ENCODE measurements at regions of chr5 and their contacts with region 1.

Region 1: GRCh38 chr5:68460147-68460798 is 244.7 kb downstream of the PIK3R1 start:
- DNase-seq: no peak
- ATAC-seq: peak; percentile 86
- H3K4me3 ChIP-seq: no peak overlapping the region
- H3K27ac ChIP-seq: no peak overlapping the region
- H3K4me1 ChIP-seq: peaks cover 5% of the 10 kb centered on the region
- H3K27me3 ChIP-seq: no peaks in the 10 kb centered on the region
- CTCF ChIP-seq: peak; percentile 58 to 72 (median 68)
- EP300 ChIP-seq: no peak
- POLR2A ChIP-seq: no peak
- RAD21 ChIP-seq: peak; percentile 95

Region 2: DNA sequence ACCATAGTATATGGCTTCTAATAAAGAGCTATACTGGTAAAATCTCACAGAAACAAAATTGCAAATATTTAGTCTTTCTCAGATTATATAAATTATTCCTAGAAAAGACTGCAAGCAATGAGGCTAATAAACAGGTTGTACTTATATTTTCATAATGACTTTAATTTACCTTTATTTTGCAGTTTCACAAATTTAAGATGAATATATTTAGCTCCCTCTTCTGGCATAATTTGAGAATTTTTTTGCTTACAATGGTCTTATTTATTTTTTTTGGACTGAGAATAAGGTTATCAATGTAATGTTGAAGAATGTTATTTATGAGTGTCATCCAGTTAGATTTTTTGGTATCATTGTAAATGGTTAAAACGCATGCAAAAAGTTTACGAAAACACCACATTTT is 188.0 kb before region 1 on chr5:
- CTCF ChIA-PET with region 1: interaction called, 15 read pairs
- POLR2A ChIA-PET with region 1: no interaction called
- RAD21 ChIA-PET with region 1: interaction called, 3 read pairs
- SMC1A ChIA-PET with region 1: interaction called, 8 read pairs
- in situ Hi-C with region 1: no loop called
- intact Hi-C with region 1: no loop called
- DNase-seq: no peak
- ATAC-seq: no peak
- H3K4me3 ChIP-seq: no peak overlapping the region
- H3K27ac ChIP-seq: no peak overlapping the region
- H3K4me1 ChIP-seq: peaks cover 34% of the 10 kb centered on the region
- H3K27me3 ChIP-seq: no peaks in the 10 kb centered on the region
- CTCF ChIP-seq: peak in 1 of 3 experiments; percentile 11; a peak in 1 of 6 replicates
- EP300 ChIP-seq: no peak
- POLR2A ChIP-seq: no peak
- RAD21 ChIP-seq: no peak

Region 3: DNA sequence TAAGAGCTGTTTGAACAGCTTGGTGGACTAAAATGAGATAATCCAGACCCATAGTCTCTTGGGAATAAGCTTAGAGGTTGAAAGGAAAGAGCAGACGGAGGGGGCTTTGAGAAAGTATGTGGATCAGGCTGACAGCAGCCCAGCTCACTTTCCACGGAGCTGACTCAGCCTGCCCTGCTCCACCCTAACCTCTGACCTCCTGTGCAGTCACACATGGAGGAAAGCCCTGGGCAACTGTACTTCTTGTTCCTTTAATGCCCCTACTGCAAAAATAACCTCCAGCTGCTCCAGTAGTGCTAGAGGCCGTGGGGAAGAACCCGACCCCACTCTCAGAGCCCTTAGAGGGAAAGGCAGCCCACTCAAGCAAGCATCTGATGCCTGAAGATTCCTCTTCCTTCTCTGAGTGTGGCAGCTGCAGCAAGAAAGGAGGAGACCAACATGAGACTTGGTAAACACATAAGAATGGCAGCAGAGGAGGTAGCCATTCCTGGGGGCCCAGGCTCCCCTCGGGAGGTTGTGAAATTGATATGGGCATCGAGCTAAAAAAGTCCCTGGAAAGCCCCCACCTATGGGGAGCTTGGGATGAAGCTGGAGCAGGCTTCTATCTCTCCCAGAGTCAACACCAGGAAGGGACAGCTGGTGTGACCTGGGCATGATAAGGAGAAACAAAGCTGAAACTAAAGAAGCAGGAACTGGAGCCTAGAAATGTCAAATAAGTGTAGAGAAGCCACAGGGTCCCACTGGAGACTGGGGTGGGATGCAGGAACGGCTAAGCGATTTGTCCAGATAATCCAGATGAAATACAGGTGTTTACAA is 40.4 kb before region 1 on chr5:
- CTCF ChIA-PET with region 1: interaction called, 5 read pairs
- POLR2A ChIA-PET with region 1: no interaction called
- RAD21 ChIA-PET with region 1: no interaction called
- SMC1A ChIA-PET with region 1: interaction called, 10 read pairs
- in situ Hi-C with region 1: no loop called
- intact Hi-C with region 1: no loop called
- DNase-seq: no peak
- ATAC-seq: no peak
- H3K4me3 ChIP-seq: no peak overlapping the region
- H3K27ac ChIP-seq: no peak overlapping the region
- H3K4me1 ChIP-seq: peaks cover 4% of the 10 kb centered on the region
- H3K27me3 ChIP-seq: no peaks in the 10 kb centered on the region
- CTCF ChIP-seq: no peak
- EP300 ChIP-seq: no peak
- POLR2A ChIP-seq: no peak
- RAD21 ChIP-seq: no peak

Region 4: GRCh38 chr5:68441309-68442073 is 18.8 kb before region 1 on chr5:
- CTCF ChIA-PET with region 1: interaction called, 63 read pairs
- POLR2A ChIA-PET with region 1: interaction called, 6 read pairs
- RAD21 ChIA-PET with region 1: interaction called, 26 read pairs
- SMC1A ChIA-PET with region 1: interaction called, 23 read pairs
- in situ Hi-C with region 1: no loop called
- intact Hi-C with region 1: no loop called
- DNase-seq: no peak
- ATAC-seq: peak; percentile 77
- H3K4me3 ChIP-seq: no peak overlapping the region
- H3K27ac ChIP-seq: peak overlapping the region; percentile 31; the same call in 1 of the 2 replicates
- H3K4me1 ChIP-seq: peaks cover 28% of the 10 kb centered on the region
- H3K27me3 ChIP-seq: no peaks in the 10 kb centered on the region
- CTCF ChIP-seq: no peak
- EP300 ChIP-seq: peak in 1 of 2 experiments; percentile 64; a peak in 2 of 4 replicates
- POLR2A ChIP-seq: no peak
- RAD21 ChIP-seq: no peak

Region 5: DNA sequence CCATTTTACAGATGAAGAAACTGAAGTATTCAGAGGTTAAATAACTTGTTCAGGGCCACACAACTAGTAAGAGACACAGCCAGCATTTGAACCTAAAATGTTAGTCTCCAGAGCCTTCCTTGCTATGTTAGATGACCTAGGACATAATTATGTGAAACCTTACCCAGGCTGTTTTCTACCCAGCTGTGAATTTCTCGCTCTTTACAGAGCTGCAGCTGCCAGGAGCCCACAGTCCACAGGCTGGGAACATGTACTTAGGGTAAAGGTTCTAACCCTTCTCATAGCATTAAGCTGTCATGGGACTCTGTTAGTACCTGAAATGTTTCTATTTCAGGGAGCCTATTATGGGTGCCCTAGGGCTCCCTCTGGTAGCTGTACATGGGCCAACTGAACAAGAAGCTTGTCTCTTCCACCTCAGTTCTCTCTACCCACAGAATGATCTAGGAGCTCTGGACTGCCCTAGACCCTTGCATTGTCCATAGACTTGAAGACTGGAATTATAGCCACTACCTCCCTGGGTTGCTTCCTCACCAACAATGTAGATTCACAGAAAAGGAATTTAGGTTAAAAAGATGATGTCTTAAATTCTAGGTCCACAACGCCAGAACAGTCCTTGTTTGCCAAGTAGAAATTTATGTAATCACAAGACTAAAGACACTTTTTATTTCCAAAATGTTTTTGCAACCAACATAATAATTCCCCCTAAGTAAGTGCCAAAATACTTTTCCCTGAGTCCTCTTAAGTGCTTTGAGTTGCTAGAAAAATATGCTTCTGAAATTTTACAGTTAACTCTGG is 18.2 kb after region 1 on chr5:
- CTCF ChIA-PET with region 1: interaction called, 8 read pairs
- POLR2A ChIA-PET with region 1: no interaction called
- RAD21 ChIA-PET with region 1: no interaction called
- SMC1A ChIA-PET with region 1: interaction called, 14 read pairs
- in situ Hi-C with region 1: no loop called
- intact Hi-C with region 1: no loop called
- DNase-seq: no peak
- ATAC-seq: no peak
- H3K4me3 ChIP-seq: no peak overlapping the region
- H3K27ac ChIP-seq: no peak overlapping the region
- H3K4me1 ChIP-seq: no peaks in the 10 kb centered on the region
- H3K27me3 ChIP-seq: no peaks in the 10 kb centered on the region
- CTCF ChIP-seq: no peak
- EP300 ChIP-seq: no peak
- POLR2A ChIP-seq: no peak
- RAD21 ChIP-seq: no peak

Region 6: DNA sequence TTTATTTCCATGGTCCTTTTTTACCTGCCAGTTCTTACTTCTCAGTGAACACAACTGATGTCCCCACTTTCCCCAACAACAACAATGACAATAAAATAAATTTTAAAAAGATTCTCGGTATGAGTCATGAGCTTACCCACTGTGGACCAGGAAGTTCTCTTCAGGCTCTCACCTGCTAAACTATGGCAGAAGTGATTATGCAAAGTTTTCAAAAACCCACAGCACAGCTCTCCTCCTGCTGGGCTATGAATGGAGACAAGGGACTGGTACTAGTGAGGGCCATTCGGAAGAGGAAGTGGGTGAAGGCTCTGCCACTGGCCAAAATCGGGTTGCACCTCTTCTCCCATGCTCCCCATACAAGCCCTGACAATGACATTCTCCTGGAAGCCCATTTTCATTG is 184.7 kb after region 1 on chr5:
- CTCF ChIA-PET with region 1: interaction called, 4 read pairs
- POLR2A ChIA-PET with region 1: no interaction called
- RAD21 ChIA-PET with region 1: interaction called, 4 read pairs
- SMC1A ChIA-PET with region 1: no interaction called
- in situ Hi-C with region 1: no loop called
- intact Hi-C with region 1: loop called (anchors 10 kb)
- DNase-seq: peak; percentile 83
- ATAC-seq: peak; percentile 97
- H3K4me3 ChIP-seq: no peak overlapping the region
- H3K27ac ChIP-seq: no peak overlapping the region
- H3K4me1 ChIP-seq: peaks cover 13% of the 10 kb centered on the region; the same call in 1 of the 2 replicates
- H3K27me3 ChIP-seq: no peaks in the 10 kb centered on the region
- CTCF ChIP-seq: no peak
- EP300 ChIP-seq: peak; percentile 14 to 57; a peak in 2 of 4 replicates
- POLR2A ChIP-seq: no peak
- RAD21 ChIP-seq: peak; percentile 36

Region 7: DNA sequence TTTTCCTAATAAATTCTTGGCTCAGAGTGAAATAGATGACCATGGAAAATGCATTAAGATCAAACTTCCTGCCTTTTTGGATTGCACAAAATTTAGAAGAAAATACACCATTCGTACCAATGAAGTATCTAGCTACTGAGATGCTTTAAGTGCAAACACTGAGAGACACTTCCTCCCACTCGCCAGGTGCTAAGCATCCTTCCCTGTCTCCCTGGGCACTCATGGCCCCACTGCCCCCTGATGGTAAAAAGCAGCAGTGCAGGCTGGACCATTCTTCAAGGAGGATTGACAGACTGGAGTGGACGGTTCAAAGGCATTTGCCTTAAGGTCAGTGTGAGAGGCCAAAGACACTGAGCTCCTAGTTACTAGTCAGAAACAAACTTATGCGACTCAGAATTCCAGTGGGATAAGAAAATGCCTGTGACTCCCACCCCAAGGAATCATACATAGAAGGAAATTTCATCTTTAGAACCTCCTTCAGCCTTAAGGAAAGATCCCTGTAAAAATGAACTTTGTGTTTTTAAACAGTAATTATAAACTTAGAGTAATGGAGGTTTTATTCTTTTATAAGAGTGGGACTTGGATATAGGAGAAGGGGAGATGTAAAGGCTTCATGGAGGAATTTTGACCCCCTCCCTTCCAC is 547.6 kb after region 1 on chr5:
- CTCF ChIA-PET with region 1: no interaction called
- POLR2A ChIA-PET with region 1: no interaction called
- RAD21 ChIA-PET with region 1: no interaction called
- SMC1A ChIA-PET with region 1: interaction called, 3 read pairs
- in situ Hi-C with region 1: no loop called
- intact Hi-C with region 1: loop called (anchors 5 kb)
- DNase-seq: peak; percentile 8
- ATAC-seq: peak; percentile 98
- H3K4me3 ChIP-seq: no peak overlapping the region
- H3K27ac ChIP-seq: no peak overlapping the region
- H3K4me1 ChIP-seq: no peaks in the 10 kb centered on the region
- H3K27me3 ChIP-seq: peaks cover 0 to 2% of the 10 kb centered on the region in 2 experiments; a peak in 3 of 4 replicates
- CTCF ChIP-seq: peak; percentile 94 to 99 (median 94)
- EP300 ChIP-seq: no peak
- POLR2A ChIP-seq: no peak
- RAD21 ChIP-seq: peak; percentile 99

Measured in GM12878 (cell line).